ENCODE measurements at regions of chr11 and their contacts with region 1.

Region 1: DNA sequence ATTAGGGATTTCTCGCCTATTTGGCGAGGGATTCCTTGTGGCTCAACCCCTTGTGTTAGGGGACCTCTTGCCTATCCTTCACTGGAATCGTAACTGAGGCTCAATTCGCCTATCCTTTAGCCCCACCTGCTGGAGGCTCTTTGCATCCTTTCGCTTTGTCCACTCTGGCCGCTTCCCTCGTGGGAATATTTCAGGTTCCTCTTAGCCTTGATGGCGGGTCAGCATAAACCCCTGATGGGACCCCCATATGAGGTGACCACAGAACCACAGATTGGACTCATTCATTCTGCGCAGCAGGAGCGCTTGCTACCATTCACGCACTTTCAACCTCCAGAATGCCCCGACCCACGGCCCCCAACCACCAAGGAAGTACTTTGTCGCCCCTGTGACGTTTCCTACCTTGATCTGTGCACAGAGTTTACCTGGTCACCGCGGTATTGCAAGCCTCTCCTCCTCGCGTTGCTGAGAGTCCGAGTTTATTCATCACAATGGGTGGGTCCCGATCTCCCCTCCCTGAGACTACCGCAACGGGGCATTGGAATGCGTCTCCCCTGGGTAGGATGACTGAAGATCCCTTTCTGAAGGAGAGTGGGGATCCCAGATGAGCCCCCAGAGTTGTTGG is at the start of gene OR52N2:
- DNase-seq: peak; percentile 58
- ATAC-seq: peak; percentile 82
- H3K4me3 Mint-ChIP-seq: peak within 1 kb of the TSS; percentile 87
- H3K27ac Mint-ChIP-seq: no peak within 1 kb of the TSS
- H3K4me1 Mint-ChIP-seq: peaks cover 11% of the 10 kb centered on the region
- H3K27me3 Mint-ChIP-seq: peaks cover 12% of the 10 kb centered on the region
- CTCF ChIP-seq: no peak
- total RNA-seq, gene OR52N2: not detected in 2 replicates

Region 2: DNA sequence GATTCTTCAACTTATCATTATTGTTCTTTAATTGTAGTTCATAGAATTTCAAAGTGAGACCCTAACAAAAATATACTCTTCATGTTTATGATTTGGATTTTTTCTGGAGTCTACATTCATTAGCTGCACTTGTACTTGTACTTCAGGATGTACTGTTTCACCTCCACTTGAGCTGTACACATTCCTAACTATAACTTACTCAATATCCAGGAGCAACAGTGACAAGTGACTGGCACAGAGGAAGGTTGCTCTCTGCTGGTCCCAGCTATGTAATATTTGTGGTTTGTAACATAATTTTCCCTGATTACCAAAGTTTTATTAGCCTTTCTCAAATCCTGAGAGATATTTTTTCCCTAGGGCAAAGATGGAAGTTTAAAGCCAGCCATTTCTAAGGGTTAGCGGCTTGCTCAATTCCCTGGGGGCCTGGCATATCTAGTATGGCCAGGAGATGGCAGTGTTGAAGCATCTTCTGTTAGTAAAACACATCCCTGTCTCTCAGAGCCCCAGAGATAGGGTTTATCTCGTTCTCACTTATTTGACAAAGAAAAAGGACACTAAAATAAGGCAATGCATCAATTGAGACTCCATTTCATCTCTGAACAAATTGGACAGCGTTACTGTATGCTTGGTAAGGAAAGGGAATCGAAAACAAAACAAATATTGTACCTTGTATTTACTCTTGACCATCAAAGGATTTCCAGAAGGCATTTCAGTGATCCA is 684.6 kb before region 1 on chr11:
- CTCF ChIA-PET with region 1: interaction called, 4 read pairs
- POLR2A ChIA-PET with region 1: no interaction called
- intact Hi-C with region 1: loop called (anchors 1 kb)
- DNase-seq: no peak
- ATAC-seq: peak; percentile 45
- H3K4me3 Mint-ChIP-seq: no peak overlapping the region
- H3K27ac Mint-ChIP-seq: no peak overlapping the region
- H3K4me1 Mint-ChIP-seq: no peaks in the 10 kb centered on the region
- H3K27me3 Mint-ChIP-seq: peaks cover 4% of the 10 kb centered on the region
- CTCF ChIP-seq: no peak

Region 3: GRCh38 chr11:5204787-5205186 is 603.8 kb before region 1 on chr11:
- CTCF ChIA-PET with region 1: no interaction called
- POLR2A ChIA-PET with region 1: no interaction called
- intact Hi-C with region 1: loop called (anchors 2 kb)
- DNase-seq: no peak
- ATAC-seq: no peak
- H3K4me3 Mint-ChIP-seq: no peak overlapping the region
- H3K27ac Mint-ChIP-seq: no peak overlapping the region
- H3K4me1 Mint-ChIP-seq: no peaks in the 10 kb centered on the region
- H3K27me3 Mint-ChIP-seq: no peaks in the 10 kb centered on the region
- CTCF ChIP-seq: no peak

Region 4: DNA sequence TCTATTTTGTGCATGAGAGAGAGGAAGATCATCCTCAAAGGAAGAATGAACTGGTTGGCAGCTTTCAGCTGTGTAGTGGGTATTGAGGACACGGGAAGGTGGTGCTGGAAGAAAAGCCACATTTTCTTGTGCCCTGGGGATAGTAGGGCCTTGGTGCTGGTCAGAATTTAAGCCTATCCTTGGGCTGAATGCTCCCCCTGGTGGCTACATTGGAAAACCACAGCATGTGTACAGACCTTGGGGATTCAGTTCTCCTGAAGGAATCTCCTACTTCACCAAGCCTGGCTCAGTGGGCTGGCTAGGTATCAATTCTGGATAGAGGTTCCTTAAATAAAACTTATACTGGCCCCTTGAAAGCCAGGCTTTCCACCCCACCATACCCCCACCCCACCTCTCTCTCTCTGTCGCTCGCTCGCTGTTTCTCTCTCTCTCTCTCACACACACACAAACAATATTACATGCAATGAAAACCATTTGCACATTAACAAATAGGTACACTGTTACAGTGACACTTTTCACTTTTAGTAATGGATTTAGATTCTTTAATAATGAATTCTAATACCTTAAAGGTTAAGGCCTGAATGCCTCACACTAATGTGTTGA is 427.8 kb before region 1 on chr11:
- CTCF ChIA-PET with region 1: no interaction called
- POLR2A ChIA-PET with region 1: no interaction called
- intact Hi-C with region 1: loop called (anchors 5 kb)
- DNase-seq: no peak
- ATAC-seq: no peak
- H3K4me3 Mint-ChIP-seq: no peak overlapping the region
- H3K27ac Mint-ChIP-seq: no peak overlapping the region
- H3K4me1 Mint-ChIP-seq: no peaks in the 10 kb centered on the region
- H3K27me3 Mint-ChIP-seq: no peaks in the 10 kb centered on the region
- CTCF ChIP-seq: no peak

Region 5: GRCh38 chr11:5476184-5476819 is 332.3 kb before region 1 on chr11:
- CTCF ChIA-PET with region 1: interaction called, 10 read pairs
- POLR2A ChIA-PET with region 1: interaction called, 3 read pairs
- intact Hi-C with region 1: loop called (anchors 1 kb)
- DNase-seq: no peak
- ATAC-seq: peak; percentile 52
- H3K4me3 Mint-ChIP-seq: no peak overlapping the region
- H3K27ac Mint-ChIP-seq: no peak overlapping the region
- H3K4me1 Mint-ChIP-seq: no peaks in the 10 kb centered on the region
- H3K27me3 Mint-ChIP-seq: peaks cover 13% of the 10 kb centered on the region
- CTCF ChIP-seq: no peak

Region 6: GRCh38 chr11:5600374-5600851 is 208.2 kb before region 1 on chr11:
- CTCF ChIA-PET with region 1: interaction called, 15 read pairs
- POLR2A ChIA-PET with region 1: no interaction called
- intact Hi-C with region 1: loop called (anchors 1 kb)
- DNase-seq: peak; percentile 25
- ATAC-seq: peak; percentile 95
- H3K4me3 Mint-ChIP-seq: no peak overlapping the region
- H3K27ac Mint-ChIP-seq: no peak overlapping the region
- H3K4me1 Mint-ChIP-seq: peaks cover 17% of the 10 kb centered on the region
- H3K27me3 Mint-ChIP-seq: peaks cover 3% of the 10 kb centered on the region
- CTCF ChIP-seq: no peak

Region 7: GRCh38 chr11:5891216-5891800 is 82.7 kb after region 1 on chr11:
- CTCF ChIA-PET with region 1: interaction called, 5 read pairs
- POLR2A ChIA-PET with region 1: no interaction called
- intact Hi-C with region 1: loop called (anchors 2 kb)
- DNase-seq: no peak
- ATAC-seq: no peak
- H3K4me3 Mint-ChIP-seq: no peak overlapping the region
- H3K27ac Mint-ChIP-seq: no peak overlapping the region
- H3K4me1 Mint-ChIP-seq: no peaks in the 10 kb centered on the region
- H3K27me3 Mint-ChIP-seq: no peaks in the 10 kb centered on the region
- CTCF ChIP-seq: no peak

Measured in activated B cell treated with CpG ODN at 0.5 μM for 24 hours (primary cell).